K562 (cell line): ENCODE measurements at regions of chr6 and their contacts with region 1.

Region 1: DNA sequence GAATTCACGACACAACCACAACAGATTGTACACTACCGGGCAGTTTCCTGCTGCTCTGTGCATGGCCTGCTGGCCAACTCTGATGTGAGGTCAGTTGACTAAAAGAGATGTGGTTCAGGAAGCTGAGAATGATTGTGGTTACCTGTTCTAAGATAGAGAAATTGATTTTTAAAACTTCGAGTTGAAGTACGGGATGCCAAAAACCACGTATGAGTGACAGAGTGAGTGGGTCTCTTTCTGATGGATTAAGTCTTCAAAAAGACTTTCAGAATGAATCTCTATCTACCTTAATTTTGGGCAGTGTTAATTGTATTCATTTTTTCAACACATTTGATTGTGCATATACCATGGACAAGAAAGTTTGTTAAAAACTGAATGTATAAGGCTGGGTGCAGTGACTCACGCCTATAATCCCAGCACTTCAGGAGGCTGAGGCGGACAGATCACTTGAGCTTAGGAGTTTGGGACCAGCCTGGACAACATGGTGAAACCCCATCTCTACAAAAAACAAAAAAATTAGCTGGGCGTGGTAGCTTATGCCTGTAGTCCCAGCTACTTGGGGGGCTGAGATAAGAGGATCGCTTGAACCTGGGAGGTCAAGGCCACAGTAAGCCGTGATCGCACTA is 121.2 kb downstream of the SGK1 start:
- DNase-seq: peak in 3 of 4 experiments; percentile 22 to 86 (median 38)
- ATAC-seq: peak; percentile 81
- H3K4me3 ChIP-seq: no peak overlapping the region
- H3K27ac ChIP-seq: peak overlapping the region; percentile 82
- H3K4me1 ChIP-seq: peaks cover 30 to 45% of the 10 kb centered on the region in 2 experiments
- H3K27me3 ChIP-seq: no peaks in the 10 kb centered on the region
- CTCF ChIP-seq: no peak
- EP300 ChIP-seq: peak; percentile 69
- POLR2A ChIP-seq: no peak
- RAD21 ChIP-seq: no peak

Region 2: GRCh38 chr6:134253681-134254080 is 57.0 kb after region 1 on chr6:
- CTCF ChIA-PET with region 1: no interaction called
- POLR2A ChIA-PET with region 1: no interaction called
- in situ Hi-C with region 1: no loop called
- intact Hi-C with region 1: loop called (anchors 5 kb)
- DNase-seq: peak in 2 of 4 experiments; percentile 22 to 63
- ATAC-seq: peak; percentile 82
- H3K4me3 ChIP-seq: no peak overlapping the region
- H3K27ac ChIP-seq: no peak overlapping the region
- H3K4me1 ChIP-seq: peaks cover 0 to 4% of the 10 kb centered on the region in 2 experiments; a peak in 1 of 5 replicates
- H3K27me3 ChIP-seq: no peaks in the 10 kb centered on the region
- CTCF ChIP-seq: no peak
- EP300 ChIP-seq: no peak; the same call in 1 of the 2 replicates
- POLR2A ChIP-seq: no peak
- RAD21 ChIP-seq: no peak

Region 3: DNA sequence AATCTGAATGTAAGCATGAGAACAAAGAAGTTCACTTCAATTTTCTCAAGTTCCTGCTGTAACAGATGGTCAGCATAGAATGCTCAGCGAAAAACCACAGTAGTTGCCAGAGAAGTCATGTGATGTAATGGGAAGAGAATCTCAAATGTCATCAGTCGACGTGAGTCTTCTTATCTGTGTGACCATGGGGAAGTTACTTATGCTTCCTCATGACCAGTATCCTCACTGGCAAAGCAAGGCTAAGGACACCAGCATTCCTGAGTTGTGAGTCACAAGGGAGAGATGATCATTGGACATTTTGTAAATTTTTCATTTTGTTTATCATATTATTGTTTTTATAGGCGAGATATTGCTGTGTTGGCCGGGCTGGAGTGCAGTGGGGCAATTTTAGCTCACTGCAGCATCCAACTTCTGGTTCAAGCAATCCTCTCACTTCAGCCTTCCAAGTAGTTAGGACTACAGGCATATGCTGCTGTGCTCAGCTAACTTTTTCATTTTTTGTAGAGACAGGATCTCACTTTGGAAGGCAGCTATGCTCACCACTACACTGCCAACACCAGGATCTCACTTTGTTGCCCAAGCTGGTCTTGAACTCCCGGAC is 99.4 kb after region 1 on chr6:
- CTCF ChIA-PET with region 1: no interaction called
- POLR2A ChIA-PET with region 1: no interaction called
- in situ Hi-C with region 1: no loop called
- intact Hi-C with region 1: loop called (anchors 5 kb)
- DNase-seq: peak; percentile 79 to 91 (median 84)
- ATAC-seq: peak; percentile 92
- H3K4me3 ChIP-seq: no peak overlapping the region
- H3K27ac ChIP-seq: peak overlapping the region; percentile 59
- H3K4me1 ChIP-seq: peaks cover 26 to 31% of the 10 kb centered on the region in 2 experiments
- H3K27me3 ChIP-seq: no peaks in the 10 kb centered on the region
- CTCF ChIP-seq: no peak
- EP300 ChIP-seq: peak; percentile 93
- POLR2A ChIP-seq: no peak
- RAD21 ChIP-seq: peak in 1 of 2 experiments; percentile 28; a peak in 2 of 4 replicates